ENCODE measurements at regions of chr7 and their contacts with region 1.

Region 1: DNA sequence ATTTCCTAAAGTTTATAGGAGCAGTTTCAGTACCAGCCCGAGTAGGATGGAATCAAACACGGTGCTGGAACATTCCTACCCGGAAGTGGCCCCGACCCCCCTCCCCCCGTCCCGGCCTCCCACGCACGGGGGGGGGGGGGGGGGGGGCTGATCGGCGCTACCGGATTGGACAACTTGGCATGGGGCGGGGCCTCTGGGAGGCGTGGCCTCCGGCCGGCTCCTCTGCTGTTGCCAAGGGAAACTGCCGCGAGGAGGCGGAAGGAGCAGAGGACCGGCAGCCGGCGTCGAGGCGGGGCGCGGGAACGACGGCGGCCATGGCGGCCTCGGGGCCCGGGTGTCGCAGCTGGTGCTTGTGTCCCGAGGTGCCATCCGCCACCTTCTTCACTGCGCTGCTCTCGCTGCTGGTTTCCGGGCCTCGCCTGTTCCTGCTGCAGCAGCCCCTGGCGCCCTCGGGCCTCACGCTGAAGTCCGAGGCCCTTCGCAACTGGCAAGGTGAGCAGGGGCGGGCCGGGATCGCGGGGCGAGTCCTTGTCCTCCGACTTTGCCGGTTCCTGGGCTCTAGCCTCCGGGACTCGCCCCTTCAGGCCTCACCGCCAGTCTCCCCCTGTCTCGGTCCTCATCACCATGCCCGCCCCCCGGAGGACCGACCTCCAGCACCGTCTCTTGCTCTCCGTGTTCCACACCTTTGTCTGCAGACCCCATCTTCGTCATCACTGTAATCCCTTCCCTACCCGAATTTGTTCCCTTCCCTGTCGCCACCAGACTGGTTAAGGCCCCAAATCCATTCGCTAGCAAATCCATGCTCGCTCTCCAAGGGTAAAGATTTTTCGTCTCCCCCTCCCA is at the start of gene RHBDD2:
- DNase-seq: peak; percentile 89 to 98
- ATAC-seq: peak; percentile 97 to 99 (median 99)
- H3K4me3 ChIP-seq: peak within 1 kb of the TSS; percentile 95
- H3K4me3 Mint-ChIP-seq: peak within 1 kb of the TSS; percentile 97
- H3K27ac ChIP-seq: peak within 1 kb of the TSS; percentile 91
- H3K27ac Mint-ChIP-seq: peak within 1 kb of the TSS; percentile 93 to 94
- H3K4me1 ChIP-seq: peaks cover 15% of the 10 kb centered on the region
- H3K4me1 Mint-ChIP-seq: peaks cover 22 to 33% of the 10 kb centered on the region in 2 donors
- H3K27me3 ChIP-seq: no peaks in the 10 kb centered on the region
- H3K27me3 Mint-ChIP-seq: no peaks in the 10 kb centered on the region
- CTCF ChIP-seq: no peak
- total RNA-seq, gene RHBDD2: 45.2 to 74.3 (median 61.9) TPM

Region 2: GRCh38 chr7:75914730-75915585 is 36.0 kb after region 1 on chr7 and contains the start of gene POR:
- intact Hi-C with region 1: loop called (anchors 1 kb)
- DNase-seq: peak; percentile 97 to 100
- ATAC-seq: peak; percentile 94 to 99 (median 95)
- H3K4me3 ChIP-seq: peak within 1 kb of the TSS; percentile 100
- H3K4me3 Mint-ChIP-seq: peak within 1 kb of the TSS; percentile 90
- H3K27ac ChIP-seq: peak within 1 kb of the TSS; percentile 99
- H3K27ac Mint-ChIP-seq: peak within 1 kb of the TSS; percentile 89 to 92
- H3K4me1 ChIP-seq: peaks cover 25% of the 10 kb centered on the region
- H3K4me1 Mint-ChIP-seq: peaks cover 21 to 30% of the 10 kb centered on the region in 2 donors
- H3K27me3 ChIP-seq: no peaks in the 10 kb centered on the region
- H3K27me3 Mint-ChIP-seq: no peaks in the 10 kb centered on the region
- CTCF ChIP-seq: no peak
- total RNA-seq, gene POR: 56.0 to 60.5 (median 58.3) TPM

Measured in natural killer cell (primary cell).